Pancreas (tissue), 10 donors: ENCODE measurements at regions of chr3 and their contacts with region 1.

Region 1: DNA sequence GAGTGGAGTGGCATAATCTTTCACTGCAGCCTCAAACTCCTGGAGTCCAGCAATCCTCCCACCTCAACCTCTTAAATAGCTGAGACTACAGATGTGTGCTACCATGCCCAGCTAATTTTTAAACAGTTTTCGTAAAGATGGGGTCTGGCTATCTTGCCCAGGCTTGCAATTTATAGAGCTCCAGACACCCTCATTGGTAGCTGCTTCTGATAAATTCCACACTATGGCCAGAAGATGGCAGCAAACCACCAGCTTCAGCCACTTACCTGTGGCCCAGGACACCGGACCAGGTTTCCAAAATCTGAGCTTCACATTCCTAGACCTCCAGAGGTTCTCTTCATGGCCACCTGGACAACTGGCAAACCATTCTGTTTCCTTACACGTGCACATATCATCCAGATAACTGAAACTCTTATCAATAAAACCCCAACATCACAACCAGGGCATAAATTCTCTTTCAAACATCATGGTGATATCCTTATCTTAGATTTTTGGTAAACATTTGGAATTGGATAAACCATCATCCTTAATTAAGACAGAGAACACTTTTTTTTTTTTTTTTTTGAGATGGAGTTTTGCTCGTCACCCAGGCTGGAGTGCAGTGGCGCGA is 28.9 kb downstream of the FBXW12 start:
- DNase-seq: peak in 4 of 6 donors; percentile 50 to 71 (median 59)
- ATAC-seq: peak; percentile 70 to 81 (median 77)
- H3K4me3 ChIP-seq: no peak overlapping the region
- H3K27ac ChIP-seq: no peak overlapping the region
- H3K4me1 ChIP-seq: peaks cover 5 to 11% (median 11%) of the 10 kb centered on the region in 3 donors
- H3K27me3 ChIP-seq: no peaks in the 10 kb centered on the region
- CTCF ChIP-seq: peak; percentile 68 to 80 (median 72)

Region 2: DNA sequence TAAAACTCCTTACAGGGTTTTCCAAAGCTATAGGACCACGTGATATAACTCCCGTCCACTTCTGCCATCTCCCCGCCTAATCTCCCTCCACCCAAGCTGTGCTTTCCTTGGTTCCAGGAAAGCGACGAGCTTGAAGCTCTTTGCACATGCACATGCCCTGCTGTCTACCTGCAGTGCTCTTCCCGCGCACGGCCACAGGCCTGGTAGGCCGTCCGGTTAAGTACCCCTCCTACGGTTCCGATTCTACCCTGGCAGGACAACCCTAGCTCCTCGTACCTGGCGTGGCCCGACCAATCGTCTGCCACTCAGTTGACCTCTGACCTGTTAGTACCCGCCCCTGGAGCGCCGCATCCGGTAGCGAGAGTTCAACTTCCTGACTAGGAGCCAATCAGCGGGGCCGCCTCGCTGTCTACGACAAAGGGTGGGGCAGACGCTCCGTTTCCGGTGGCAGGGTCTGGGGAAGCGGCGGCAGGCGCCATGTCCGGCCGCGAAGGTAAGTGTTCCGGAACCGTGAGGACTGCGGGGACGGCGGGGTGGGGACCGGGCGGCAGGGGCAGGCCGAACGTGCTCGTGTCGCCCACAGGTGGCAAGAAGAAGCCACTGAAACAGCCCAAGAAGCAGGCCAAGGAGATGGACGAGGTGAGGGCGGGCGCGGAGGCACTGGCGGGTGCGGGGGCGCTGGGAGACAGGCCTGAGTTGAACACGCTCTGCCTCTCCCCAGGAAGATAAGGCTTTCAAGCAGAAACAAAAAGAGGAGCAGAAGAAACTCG is 39.1 kb after region 1 on chr3 and contains the starts of genes CCDC51 and TMA7:
- intact Hi-C with region 1: loop called in 2 of 3 experiments (anchors 5 kb)
- DNase-seq: peak; percentile 98 to 100 (median 98)
- ATAC-seq: peak; percentile 94 to 99 (median 96)
- H3K4me3 ChIP-seq: peak within 1 kb of the TSS; percentile 53 to 75 (median 68)
- H3K27ac ChIP-seq: peak within 1 kb of the TSS; percentile 65 to 81 (median 74)
- H3K4me1 ChIP-seq: peaks cover 8 to 13% (median 13%) of the 10 kb centered on the region in 3 donors
- H3K27me3 ChIP-seq: no peaks in the 10 kb centered on the region
- CTCF ChIP-seq: no peak
- total RNA-seq, gene CCDC51: 1.6 to 4.3 (median 3.3) TPM
- total RNA-seq, gene TMA7: 59.0 to 83.8 (median 68.0) TPM

Region 3: DNA sequence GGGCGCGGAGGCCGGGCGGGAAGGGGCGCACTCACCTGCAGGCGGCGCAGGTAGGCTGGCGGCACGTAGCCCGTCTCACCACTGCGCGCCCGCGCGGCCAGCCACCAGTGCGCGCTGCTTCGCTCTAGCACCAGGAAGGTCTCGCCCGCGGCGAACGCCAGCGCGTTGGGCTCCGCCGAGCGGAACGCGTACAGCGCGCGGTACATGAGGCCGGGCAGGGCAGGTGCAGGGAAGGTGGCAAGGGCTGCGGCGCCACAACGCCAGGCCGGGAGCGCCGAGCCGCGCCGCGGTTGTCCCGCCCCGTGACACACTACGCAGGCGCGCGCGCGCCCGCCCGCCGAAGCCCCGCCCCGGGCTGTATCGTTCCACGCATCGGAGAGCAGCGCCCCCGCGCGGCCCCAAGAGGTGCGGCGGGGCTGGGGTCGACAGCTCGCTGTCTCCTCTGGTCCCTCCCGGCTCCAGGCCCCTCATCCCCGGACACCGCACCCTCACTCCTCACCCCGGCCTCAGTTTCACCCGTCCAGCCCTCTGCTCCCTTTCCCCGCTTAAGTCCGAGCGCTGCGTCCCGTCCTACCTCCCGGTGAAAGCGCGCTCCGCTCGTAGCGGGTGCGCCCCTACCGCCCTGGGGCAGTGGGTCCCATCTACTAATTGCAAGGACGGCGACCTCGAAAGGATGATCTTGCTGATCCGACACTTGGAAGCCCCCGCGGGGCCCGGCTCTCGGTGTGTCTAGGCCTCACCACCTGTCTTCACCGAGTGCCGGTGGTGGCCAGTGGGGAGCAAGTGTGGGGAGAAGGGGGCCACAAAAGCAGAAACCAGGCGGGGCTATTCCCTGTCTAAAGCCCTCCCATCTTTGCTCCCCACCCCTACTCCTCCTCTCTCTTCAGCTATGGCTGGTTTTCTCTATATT is 284.9 kb after region 1 on chr3 and contains the start of gene NCKIPSD:
- intact Hi-C with region 1: no loop called
- DNase-seq: peak; percentile 82 to 99 (median 91)
- ATAC-seq: peak; percentile 96 to 97 (median 96)
- H3K4me3 ChIP-seq: peak within 1 kb of the TSS; percentile 65 to 91 (median 84)
- H3K27ac ChIP-seq: peak within 1 kb of the TSS; percentile 83 to 88 (median 86)
- H3K4me1 ChIP-seq: peaks cover 4 to 9% (median 6%) of the 10 kb centered on the region in 3 donors
- H3K27me3 ChIP-seq: no peaks in the 10 kb centered on the region
- CTCF ChIP-seq: peak; percentile 61 to 87 (median 84)
- total RNA-seq, gene NCKIPSD: 5.4 to 10.2 (median 7.2) TPM